Posterior cingulate gyrus (tissue), 11 donors: ENCODE measurements at regions of chr12 and their contacts with region 1.

Region 1: DNA sequence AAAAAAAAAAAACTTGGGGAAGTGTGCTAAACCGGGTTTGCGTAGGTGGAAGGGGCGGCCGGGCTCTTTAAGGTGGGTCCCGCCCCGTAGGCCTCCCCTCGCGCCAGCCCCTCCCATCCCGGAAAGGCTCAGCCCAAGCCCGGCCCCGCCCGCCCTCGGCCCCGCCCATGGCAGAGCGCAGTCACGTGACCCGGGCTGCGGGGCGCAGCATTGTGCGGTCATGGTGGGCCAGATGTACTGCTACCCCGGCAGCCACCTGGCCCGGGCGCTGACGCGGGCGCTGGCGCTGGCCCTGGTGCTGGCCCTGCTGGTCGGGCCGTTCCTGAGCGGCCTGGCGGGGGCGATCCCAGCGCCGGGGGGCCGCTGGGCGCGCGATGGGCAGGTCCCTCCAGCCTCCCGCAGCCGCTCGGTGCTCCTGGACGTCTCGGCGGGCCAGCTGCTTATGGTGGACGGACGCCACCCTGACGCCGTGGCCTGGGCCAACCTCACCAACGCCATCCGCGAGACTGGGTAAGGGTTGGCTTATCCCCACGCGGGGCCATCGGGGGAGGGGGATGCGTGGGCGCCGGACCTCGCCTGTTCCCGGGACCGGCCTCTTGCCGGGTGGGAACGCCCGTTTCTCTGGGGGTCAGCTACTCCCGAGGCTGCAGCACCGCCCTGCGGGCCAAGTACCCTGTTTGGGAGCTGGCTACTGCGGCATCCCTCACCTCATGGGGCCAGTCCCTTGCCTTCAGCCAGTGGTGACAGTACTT is at the start of gene PLBD2:
- DNase-seq: peak; percentile 88 to 99 (median 94)

Region 2: GRCh38 chr12:113334786-113335540 is 23.6 kb before region 1 on chr12 and contains the start of gene SLC8B1:
- intact Hi-C with region 1: loop called (anchors 1 kb)
- DNase-seq: peak; percentile 72 to 98 (median 89)

Region 3: DNA sequence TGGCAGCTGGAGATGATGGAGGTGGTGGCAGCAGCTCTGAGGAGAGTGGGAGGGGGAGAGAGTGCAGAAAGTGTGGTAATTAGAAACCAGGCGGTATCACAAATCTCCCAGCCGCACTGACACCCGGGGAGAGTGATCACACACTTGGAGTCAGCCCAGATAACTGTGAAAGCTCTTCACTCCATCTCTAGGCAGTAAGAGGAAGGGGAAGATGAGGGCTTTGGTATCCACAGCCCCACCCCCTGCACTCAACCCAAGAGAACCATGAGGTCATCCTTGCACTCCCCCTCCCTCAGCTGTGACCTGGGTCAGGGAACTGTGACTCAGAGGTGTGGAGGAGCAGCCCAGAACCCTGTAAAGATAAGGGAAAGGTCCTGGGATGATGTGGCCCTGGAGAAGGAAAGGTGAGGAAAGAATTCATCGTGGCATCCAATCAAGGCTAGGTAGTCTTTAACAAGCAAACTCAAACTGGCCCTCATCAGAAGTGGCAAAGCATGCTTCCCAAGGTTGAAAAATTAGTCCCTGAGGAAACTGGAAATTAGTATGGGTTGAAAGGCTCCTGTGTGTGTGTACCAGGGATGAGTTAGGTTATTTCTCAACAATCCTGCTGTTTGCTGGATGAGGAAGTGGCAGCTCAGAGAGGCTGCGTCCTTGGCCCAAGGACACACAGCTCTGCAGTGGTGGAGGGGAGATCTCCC is 224.1 kb after region 1 on chr12:
- intact Hi-C with region 1: no loop called
- DNase-seq: no peak